Activated CD8-positive, alpha-beta T cell treated with anti-CD3 and anti-CD28 coated beads, Interleukin-2, amount 10 ng/mL, durations not matched to agents 7 days and 5 days (primary cell): ENCODE measurements at regions of chr16 and their contacts with region 1.

Region 1: DNA sequence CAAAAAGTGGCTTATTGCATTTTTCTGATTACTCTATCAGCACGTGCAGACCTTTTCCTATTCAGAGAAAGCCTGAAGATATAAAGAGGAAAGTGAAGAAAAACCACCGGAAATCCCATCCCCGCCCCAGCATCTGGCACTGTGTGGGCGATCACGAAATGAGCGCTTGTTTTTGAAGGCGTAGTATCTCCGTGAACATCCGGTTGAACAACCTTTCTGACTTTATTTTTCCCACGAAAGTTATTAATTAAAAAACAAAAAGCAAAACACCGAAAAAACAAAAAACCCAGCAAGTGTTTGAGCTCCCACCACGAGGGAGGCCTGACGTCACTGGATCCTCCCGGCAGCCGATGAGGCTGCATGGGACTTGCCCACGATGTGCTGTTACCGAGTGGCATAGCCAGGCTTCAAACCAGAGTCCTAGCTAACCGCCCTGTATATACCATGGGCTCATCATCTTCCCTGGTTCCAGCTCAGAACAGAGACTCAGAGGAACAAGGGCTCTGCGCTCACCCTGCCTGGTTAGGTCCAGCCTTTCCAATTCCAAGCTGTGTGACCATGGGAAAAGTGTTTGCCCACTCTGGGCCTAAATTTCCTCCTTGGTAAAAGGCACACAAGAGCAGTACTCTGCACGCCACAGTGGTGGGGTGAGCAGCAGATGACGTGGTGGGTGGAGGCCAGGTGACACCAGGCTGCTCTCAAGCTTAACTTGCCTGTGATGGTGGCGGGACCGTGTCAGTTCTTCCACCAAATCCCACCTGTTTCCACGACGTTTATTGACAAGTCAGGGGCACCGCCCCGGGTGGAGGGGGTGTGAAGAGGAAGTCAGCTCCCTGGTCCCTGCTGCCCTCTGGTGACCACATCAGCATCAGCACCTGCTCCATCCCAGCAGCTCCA is 34.3 kb upstream of the IL21R start:
- DNase-seq: peak; percentile 93
- ATAC-seq: peak; percentile 82
- H3K4me3 Mint-ChIP-seq: peak overlapping the region; percentile 66
- H3K27ac Mint-ChIP-seq: peak overlapping the region; percentile 99
- H3K4me1 Mint-ChIP-seq: peaks cover 77% of the 10 kb centered on the region
- H3K27me3 Mint-ChIP-seq: no peaks in the 10 kb centered on the region

Region 2: DNA sequence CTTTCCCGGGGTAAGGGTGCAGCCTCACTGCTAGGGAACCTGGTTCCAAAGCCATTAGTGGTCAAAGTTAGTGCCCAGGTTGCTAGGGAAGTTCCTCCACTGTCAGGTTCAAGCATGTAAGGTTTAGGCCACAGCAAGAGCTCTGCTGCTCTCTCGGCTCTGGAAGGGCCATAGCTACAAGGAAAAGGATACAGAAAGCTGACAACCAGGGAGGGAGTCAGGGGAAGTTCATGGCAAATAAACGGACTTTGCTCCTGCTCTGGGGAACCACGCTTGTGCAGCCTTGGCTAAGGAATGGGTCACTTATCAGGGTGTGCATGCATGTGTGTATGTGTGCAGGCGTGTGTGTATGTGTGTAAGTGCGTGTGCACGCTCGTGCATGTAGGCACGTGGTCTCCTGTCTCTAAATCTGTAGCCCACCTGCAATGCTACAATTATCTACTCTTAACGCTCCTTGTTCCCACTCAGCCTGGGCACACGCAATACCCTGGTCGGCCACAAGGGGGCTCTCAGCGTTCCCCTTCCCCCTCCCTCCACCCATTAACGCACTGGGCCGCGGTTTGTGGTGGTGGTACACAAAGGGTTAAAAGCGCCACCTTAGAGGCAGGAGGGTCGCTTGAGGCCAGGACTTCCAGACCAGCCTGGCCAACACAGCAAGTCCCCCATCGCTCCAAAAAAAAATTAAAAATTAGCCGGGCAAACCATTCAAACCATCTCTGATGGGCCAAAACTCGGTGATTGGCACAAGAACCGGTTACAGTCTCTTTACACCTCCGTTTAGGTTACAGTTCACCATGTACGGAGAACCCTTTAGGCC is 212.8 kb before region 1 on chr16:
- CTCF ChIA-PET with region 1: interaction called, 26 read pairs
- POLR2A ChIA-PET with region 1: no interaction called
- DNase-seq: peak; percentile 76
- ATAC-seq: peak; percentile 76
- H3K4me3 Mint-ChIP-seq: no peak overlapping the region
- H3K27ac Mint-ChIP-seq: no peak overlapping the region
- H3K4me1 Mint-ChIP-seq: peaks cover 17% of the 10 kb centered on the region
- H3K27me3 Mint-ChIP-seq: no peaks in the 10 kb centered on the region

Region 3: DNA sequence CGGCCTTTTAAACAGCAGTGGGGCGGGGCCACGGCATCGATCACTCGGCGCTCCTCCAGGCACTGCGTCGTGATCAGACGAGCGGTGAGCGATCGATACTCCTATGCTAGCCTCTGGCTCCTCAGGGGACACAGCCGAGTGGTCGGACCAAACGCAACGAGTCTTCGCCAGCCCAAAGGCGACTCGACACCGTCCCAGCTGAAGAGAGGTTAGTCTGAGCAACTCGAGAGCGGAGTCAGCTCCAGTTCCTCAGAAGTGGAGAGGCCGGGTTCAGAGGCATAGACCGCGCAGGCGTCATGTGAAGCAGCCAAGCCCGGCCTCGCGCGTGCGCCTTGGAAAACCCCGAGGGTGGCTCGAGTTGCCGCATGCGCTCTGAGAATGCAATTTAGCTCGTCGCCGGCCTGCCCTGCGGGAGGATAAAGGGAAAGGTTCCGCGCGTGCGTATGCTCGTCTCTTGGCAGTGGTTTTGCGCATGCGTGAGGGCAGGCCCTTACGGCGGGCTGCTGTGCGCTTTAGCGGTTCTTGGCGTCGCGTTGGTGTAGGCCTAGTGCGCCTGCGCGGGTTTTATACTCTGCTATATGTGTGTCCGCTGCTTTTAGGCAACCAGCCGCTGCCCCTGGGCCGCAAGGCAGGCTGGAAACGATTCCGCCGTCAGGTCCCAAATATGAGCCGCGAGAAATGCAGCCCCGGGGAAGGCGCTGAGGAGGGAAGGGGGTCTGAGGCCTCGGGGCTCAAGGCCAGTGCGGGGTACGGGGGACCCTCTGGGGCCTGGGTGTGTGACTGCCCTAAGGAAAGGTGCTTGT is 164.1 kb before region 1 on chr16 and contains the start of gene KDM8:
- CTCF ChIA-PET with region 1: interaction called, 20 read pairs
- POLR2A ChIA-PET with region 1: interaction called, 7 read pairs
- DNase-seq: peak; percentile 100
- ATAC-seq: peak; percentile 95
- H3K4me3 Mint-ChIP-seq: peak within 1 kb of the TSS; percentile 98
- H3K27ac Mint-ChIP-seq: peak within 1 kb of the TSS; percentile 99
- H3K4me1 Mint-ChIP-seq: peaks cover 59% of the 10 kb centered on the region
- H3K27me3 Mint-ChIP-seq: no peaks in the 10 kb centered on the region
- total RNA-seq, gene KDM8: 14.7 to 15.0 TPM

Region 4: DNA sequence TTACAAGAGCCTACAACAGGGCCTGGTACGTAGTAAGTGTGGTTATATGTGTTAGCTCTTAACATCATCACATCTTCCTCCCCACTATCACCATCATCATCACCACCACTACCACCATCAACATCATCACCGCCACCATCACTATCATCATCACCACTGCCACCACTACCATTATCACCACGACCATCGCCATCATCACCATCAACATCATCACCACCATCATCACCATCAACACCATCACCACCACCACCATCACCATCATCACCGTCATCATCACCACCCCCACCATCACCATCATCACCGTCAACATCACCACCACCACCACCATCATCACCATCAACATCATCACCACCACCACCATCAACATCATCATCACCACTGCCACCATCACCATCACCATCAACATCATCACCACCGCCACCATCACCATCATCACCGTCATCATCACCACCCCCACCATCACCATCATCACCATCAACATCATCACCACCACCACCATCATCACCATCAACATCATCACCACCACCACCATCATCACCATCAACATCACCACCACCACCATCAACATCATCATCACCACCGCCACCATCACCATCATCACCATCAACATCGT is 61.7 kb before region 1 on chr16:
- CTCF ChIA-PET with region 1: no interaction called
- POLR2A ChIA-PET with region 1: no interaction called
- DNase-seq: no peak
- ATAC-seq: no peak
- H3K4me3 Mint-ChIP-seq: no peak overlapping the region
- H3K27ac Mint-ChIP-seq: no peak overlapping the region
- H3K4me1 Mint-ChIP-seq: peaks cover 13% of the 10 kb centered on the region
- H3K27me3 Mint-ChIP-seq: peaks cover 2% of the 10 kb centered on the region

Region 5: GRCh38 chr16:27318392-27319226 is 49.1 kb before region 1 on chr16:
- CTCF ChIA-PET with region 1: interaction called, 48 read pairs
- POLR2A ChIA-PET with region 1: interaction called, 42 read pairs
- DNase-seq: peak; percentile 80
- ATAC-seq: peak; percentile 67
- H3K4me3 Mint-ChIP-seq: peak overlapping the region; percentile 90
- H3K27ac Mint-ChIP-seq: peak overlapping the region; percentile 93
- H3K4me1 Mint-ChIP-seq: peaks cover 81% of the 10 kb centered on the region
- H3K27me3 Mint-ChIP-seq: no peaks in the 10 kb centered on the region

Region 6: DNA sequence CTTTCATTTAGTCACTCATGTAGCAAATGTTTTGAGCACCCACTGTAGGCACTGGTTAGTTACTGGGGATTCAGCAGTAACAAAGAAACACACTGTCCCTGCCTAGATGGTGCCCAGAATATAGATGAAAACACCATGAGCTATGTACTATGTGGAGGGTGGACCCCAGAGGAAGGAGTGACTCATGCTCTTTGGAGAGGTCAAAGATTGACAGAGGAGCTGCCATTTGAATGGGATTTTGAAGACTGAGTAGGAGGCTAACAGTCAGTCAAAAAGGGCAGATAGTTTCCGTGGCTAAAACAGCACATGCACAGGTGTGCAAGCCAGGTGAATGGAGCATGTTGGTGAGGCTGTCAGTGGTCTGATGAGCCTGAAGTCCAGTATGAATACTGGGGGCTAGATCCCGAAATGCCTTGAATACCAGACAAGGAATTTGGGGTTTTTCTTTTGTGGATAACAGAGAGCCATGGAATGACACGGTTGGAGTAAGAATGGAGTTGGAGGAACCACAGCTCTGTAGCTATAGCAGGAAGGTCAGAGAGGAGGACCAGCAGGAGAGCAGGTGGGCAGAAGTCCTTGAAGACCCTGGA is 40.4 kb after region 1 on chr16:
- CTCF ChIA-PET with region 1: interaction called, 84 read pairs
- POLR2A ChIA-PET with region 1: interaction called, 100 read pairs
- DNase-seq: peak; percentile 55
- ATAC-seq: peak; percentile 62
- H3K4me3 Mint-ChIP-seq: peak overlapping the region; percentile 40
- H3K27ac Mint-ChIP-seq: peak overlapping the region; percentile 84
- H3K4me1 Mint-ChIP-seq: peaks cover 82% of the 10 kb centered on the region
- H3K27me3 Mint-ChIP-seq: no peaks in the 10 kb centered on the region

Region 7: DNA sequence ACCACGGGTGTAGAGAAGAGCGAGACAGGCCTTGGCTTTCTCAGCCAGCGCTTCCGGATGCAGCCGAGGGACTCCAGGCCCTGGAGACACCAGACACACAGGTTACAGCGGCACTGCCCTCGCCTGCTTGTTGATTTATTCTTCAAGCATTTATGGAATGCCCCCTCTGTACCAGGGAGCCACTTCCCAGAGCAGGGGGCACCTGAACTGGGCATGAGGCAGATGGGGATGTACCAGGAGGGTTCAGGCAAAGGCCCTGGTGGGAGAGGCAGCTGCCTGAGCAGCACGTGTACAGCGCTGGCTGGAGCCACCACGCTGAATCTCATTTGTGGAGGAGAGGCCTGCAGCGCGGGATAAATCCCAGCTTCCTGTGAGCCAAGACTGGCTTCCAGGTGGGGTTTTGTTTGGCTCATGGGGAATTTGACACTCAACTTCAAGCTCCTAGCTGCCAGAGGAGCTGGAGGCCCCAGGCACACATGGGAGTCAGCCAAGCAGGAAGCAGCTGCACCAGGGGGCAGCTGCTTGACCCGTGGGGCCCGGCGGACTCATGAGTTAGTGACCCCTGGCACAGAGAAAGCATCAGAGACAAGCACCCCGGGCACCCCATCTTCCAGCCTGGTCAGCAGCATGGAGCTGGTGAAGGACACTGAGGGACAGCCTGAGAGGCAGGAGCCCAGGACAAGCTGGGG is 93.9 kb after region 1 on chr16:
- CTCF ChIA-PET with region 1: interaction called, 13 read pairs
- POLR2A ChIA-PET with region 1: interaction called, 6 read pairs
- DNase-seq: no peak
- ATAC-seq: no peak
- H3K4me3 Mint-ChIP-seq: no peak overlapping the region
- H3K27ac Mint-ChIP-seq: peak overlapping the region; percentile 34
- H3K4me1 Mint-ChIP-seq: peaks cover 61% of the 10 kb centered on the region
- H3K27me3 Mint-ChIP-seq: no peaks in the 10 kb centered on the region